Activated CD4-positive, alpha-beta T cell treated with anti-CD3 and anti-CD28 coated beads, Interleukin-2, amount 10 ng/mL, durations not matched to agents 24 days and 14 days (primary cell): ENCODE measurements at regions of chr17 and their contacts with region 1.

Region 1: DNA sequence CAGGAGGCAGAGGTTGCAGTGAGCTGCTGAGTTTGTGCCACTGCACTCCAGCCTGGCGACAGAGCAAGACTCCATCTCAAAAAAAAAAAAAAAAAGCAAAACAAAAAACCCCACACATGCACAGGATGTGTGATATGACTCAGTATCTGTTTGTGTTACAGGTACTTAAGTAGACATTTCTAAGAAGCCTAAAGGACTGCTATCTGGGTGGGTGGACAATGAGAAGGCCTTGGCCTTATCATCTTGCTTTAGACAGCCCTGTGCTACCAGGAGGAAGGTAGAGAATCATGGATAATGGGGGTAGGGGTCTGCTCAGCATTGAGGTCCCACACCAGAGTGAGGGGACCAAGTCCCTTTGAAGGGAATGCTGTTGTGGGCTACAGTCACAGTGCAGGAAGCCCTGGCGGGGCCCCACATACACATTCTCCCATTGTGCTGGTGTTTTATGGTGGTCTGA is 26.7 kb downstream of the PLD6 start:
- DNase-seq: peak; percentile 83
- H3K4me3 Mint-ChIP-seq: peak overlapping the region; percentile 92
- H3K27ac Mint-ChIP-seq: peak overlapping the region; percentile 98
- H3K4me1 Mint-ChIP-seq: peaks cover 72% of the 10 kb centered on the region
- H3K27me3 Mint-ChIP-seq: no peaks in the 10 kb centered on the region

Region 2: GRCh38 chr17:17075038-17075781 is 104.2 kb before region 1 on chr17:
- intact Hi-C with region 1: no loop called
- DNase-seq: peak; percentile 63
- H3K4me3 Mint-ChIP-seq: no peak overlapping the region
- H3K27ac Mint-ChIP-seq: no peak overlapping the region
- H3K4me1 Mint-ChIP-seq: peaks cover 41% of the 10 kb centered on the region
- H3K27me3 Mint-ChIP-seq: no peaks in the 10 kb centered on the region

Region 3: DNA sequence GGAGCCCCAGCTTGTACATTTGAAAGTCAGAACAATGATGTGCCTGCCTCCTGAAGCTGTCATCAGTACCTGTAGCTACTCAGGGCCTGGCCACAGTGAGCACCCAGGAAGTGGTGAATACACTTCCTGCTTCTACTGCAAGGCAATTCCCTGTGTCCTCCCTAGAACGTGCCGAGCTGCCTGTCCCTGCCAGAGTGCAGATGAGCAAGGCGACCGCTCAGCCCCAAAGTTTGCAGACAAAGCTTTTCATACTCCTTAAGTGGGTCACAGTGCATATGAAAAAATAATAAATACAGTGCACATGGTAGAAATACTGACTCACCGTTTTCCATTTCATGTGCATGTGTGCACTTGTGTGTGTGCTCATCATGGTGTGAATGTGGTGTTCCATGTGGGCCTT is 59.9 kb before region 1 on chr17:
- intact Hi-C with region 1: loop called (anchors 5 kb)
- DNase-seq: peak; percentile 86
- H3K4me3 Mint-ChIP-seq: peak overlapping the region; percentile 34
- H3K27ac Mint-ChIP-seq: peak overlapping the region; percentile 93
- H3K4me1 Mint-ChIP-seq: peaks cover 68% of the 10 kb centered on the region
- H3K27me3 Mint-ChIP-seq: no peaks in the 10 kb centered on the region

Region 4: GRCh38 chr17:17151962-17152361 is 27.4 kb before region 1 on chr17:
- intact Hi-C with region 1: loop called (anchors 1 kb)
- DNase-seq: no peak
- H3K4me3 Mint-ChIP-seq: no peak overlapping the region
- H3K27ac Mint-ChIP-seq: peak overlapping the region; percentile 85
- H3K4me1 Mint-ChIP-seq: peaks cover 42% of the 10 kb centered on the region
- H3K27me3 Mint-ChIP-seq: no peaks in the 10 kb centered on the region

Region 5: GRCh38 chr17:17191346-17191792 is 12.0 kb after region 1 on chr17:
- intact Hi-C with region 1: no loop called
- DNase-seq: no peak
- H3K4me3 Mint-ChIP-seq: no peak overlapping the region
- H3K27ac Mint-ChIP-seq: no peak overlapping the region
- H3K4me1 Mint-ChIP-seq: peaks cover 9% of the 10 kb centered on the region
- H3K27me3 Mint-ChIP-seq: no peaks in the 10 kb centered on the region

Region 6: GRCh38 chr17:17303010-17303846 is 123.8 kb after region 1 on chr17 and contains the start of gene NT5M:
- intact Hi-C with region 1: loop called (anchors 5 kb)
- DNase-seq: peak; percentile 94
- H3K4me3 Mint-ChIP-seq: peak within 1 kb of the TSS; percentile 89
- H3K27ac Mint-ChIP-seq: peak within 1 kb of the TSS; percentile 92
- H3K4me1 Mint-ChIP-seq: peaks cover 30% of the 10 kb centered on the region
- H3K27me3 Mint-ChIP-seq: no peaks in the 10 kb centered on the region
- total RNA-seq, gene NT5M: 7.1 and 8.1 TPM in 2 replicates